ENCODE measurements at regions of chr1 and their contacts with region 1.

Region 1: GRCh38 chr1:186806477-186806876 is 22.3 kb upstream of the PLA2G4A start:
- DNase-seq: peak; percentile 5
- ATAC-seq: peak; percentile 63
- H3K4me3 ChIP-seq: no peak overlapping the region
- H3K27ac ChIP-seq: no peak overlapping the region
- H3K4me1 ChIP-seq: no peaks in the 10 kb centered on the region
- H3K27me3 ChIP-seq: no peaks in the 10 kb centered on the region
- CTCF ChIP-seq: peak; percentile 39
- EP300 ChIP-seq: no peak
- POLR2A ChIP-seq: no peak
- RAD21 ChIP-seq: no peak

Region 2: GRCh38 chr1:186482661-186483255 is 323.7 kb before region 1 on chr1:
- CTCF ChIA-PET with region 1: no interaction called
- POLR2A ChIA-PET with region 1: no interaction called
- in situ Hi-C with region 1: no loop called
- intact Hi-C with region 1: loop called (anchors 1 kb)
- DNase-seq: peak; percentile 47
- ATAC-seq: peak; percentile 72
- H3K4me3 ChIP-seq: no peak overlapping the region
- H3K27ac ChIP-seq: no peak overlapping the region
- H3K4me1 ChIP-seq: no peaks in the 10 kb centered on the region
- H3K27me3 ChIP-seq: no peaks in the 10 kb centered on the region
- CTCF ChIP-seq: peak; percentile 83
- EP300 ChIP-seq: no peak
- POLR2A ChIP-seq: no peak
- RAD21 ChIP-seq: peak; percentile 67; the same call in 1 of the 2 replicates

Region 3: GRCh38 chr1:186605762-186606350 is 200.6 kb before region 1 on chr1:
- CTCF ChIA-PET with region 1: no interaction called
- POLR2A ChIA-PET with region 1: no interaction called
- in situ Hi-C with region 1: no loop called
- intact Hi-C with region 1: loop called (anchors 1 kb)
- DNase-seq: peak; percentile 23
- ATAC-seq: peak; percentile 89
- H3K4me3 ChIP-seq: no peak overlapping the region
- H3K27ac ChIP-seq: no peak overlapping the region
- H3K4me1 ChIP-seq: no peaks in the 10 kb centered on the region
- H3K27me3 ChIP-seq: no peaks in the 10 kb centered on the region; a peak in 1 of 5 replicates
- CTCF ChIP-seq: peak; percentile 78
- EP300 ChIP-seq: no peak
- POLR2A ChIP-seq: no peak
- RAD21 ChIP-seq: peak; percentile 41; the same call in 1 of the 2 replicates

Region 4: GRCh38 chr1:186730951-186731729 is 75.3 kb before region 1 on chr1:
- CTCF ChIA-PET with region 1: no interaction called
- POLR2A ChIA-PET with region 1: no interaction called
- in situ Hi-C with region 1: no loop called
- intact Hi-C with region 1: no loop called
- DNase-seq: no peak
- ATAC-seq: no peak
- H3K4me3 ChIP-seq: no peak overlapping the region
- H3K27ac ChIP-seq: no peak overlapping the region
- H3K4me1 ChIP-seq: no peaks in the 10 kb centered on the region
- H3K27me3 ChIP-seq: no peaks in the 10 kb centered on the region
- CTCF ChIP-seq: no peak
- EP300 ChIP-seq: no peak
- POLR2A ChIP-seq: no peak
- RAD21 ChIP-seq: no peak